Caco-2 (cell line): ENCODE measurements at regions of chr9 and their contacts with region 1.

Region 1: GRCh38 chr9:129823935-129824601 is at the start of gene TOR1A:
- DNase-seq: peak; percentile 93 to 95
- H3K4me3 ChIP-seq: peak within 1 kb of the TSS; percentile 100
- H3K4me3 Mint-ChIP-seq: peak within 1 kb of the TSS; percentile 90
- H3K27ac Mint-ChIP-seq: peak within 1 kb of the TSS; percentile 81
- H3K4me1 ChIP-seq: no peaks in the 10 kb centered on the region
- H3K4me1 Mint-ChIP-seq: peaks cover 6% of the 10 kb centered on the region
- H3K27me3 ChIP-seq: no peaks in the 10 kb centered on the region
- H3K27me3 Mint-ChIP-seq: no peaks in the 10 kb centered on the region
- CTCF ChIP-seq: no peak
- total RNA-seq, gene TOR1A: 31.8 and 32.2 TPM in 2 replicates

Region 2: DNA sequence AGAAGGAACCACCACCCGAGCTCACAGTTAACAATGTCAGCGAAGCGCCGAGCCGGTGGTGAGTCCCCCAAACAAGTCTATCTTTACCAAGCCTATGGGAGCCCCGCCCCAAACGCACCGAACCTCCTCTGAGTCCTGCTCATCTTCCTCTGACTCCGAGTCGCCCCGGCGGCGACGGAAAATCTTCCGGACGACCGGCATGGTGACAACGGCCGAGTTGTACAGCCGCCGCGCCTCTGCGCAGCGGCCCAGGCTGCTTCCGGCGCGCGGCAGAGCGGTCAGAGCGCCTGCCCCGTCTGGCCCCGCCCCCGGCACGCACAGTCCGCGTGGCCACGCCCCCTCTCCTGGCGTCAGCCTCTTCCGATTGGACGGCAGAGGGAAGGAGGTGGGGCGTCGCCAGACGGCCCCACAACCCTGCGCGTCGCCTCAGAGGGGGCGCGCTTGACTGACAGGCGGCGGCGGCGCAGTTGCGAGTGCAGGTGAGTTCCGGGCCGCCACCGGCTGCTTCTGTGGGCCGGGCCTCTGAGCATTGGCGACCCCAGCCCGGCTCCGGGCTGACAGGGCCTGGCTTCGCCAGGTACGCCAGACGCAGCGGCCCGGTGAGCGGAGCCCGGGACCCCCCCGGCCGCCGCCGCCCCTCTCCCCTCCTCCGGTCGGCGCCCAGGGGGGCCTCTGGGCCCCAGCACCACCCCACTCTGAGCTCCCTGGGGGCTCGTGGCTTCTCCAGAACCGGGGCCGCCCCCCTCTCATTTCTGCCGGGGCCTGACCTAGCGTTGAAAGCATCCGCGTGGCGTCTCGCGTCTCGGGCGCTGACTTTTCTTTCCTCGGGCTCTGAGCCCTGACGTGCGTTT is 11.2 kb after region 1 on chr9 and contains the starts of genes C9orf78 and USP20:
- CTCF ChIA-PET with region 1: no interaction called
- POLR2A ChIA-PET with region 1: no interaction called
- intact Hi-C with region 1: loop called (anchors 1 kb)
- DNase-seq: peak; percentile 95 to 98
- H3K4me3 ChIP-seq: peak within 1 kb of the TSS; percentile 82
- H3K4me3 Mint-ChIP-seq: peak within 1 kb of the TSS; percentile 100
- H3K27ac Mint-ChIP-seq: peak within 1 kb of the TSS; percentile 100
- H3K4me1 ChIP-seq: peaks cover 3% of the 10 kb centered on the region; the same call in 1 of the 2 replicates
- H3K4me1 Mint-ChIP-seq: peaks cover 11% of the 10 kb centered on the region
- H3K27me3 ChIP-seq: no peaks in the 10 kb centered on the region
- H3K27me3 Mint-ChIP-seq: no peaks in the 10 kb centered on the region
- CTCF ChIP-seq: no peak
- total RNA-seq, gene C9orf78: 38.3 and 44.1 TPM in 2 replicates
- total RNA-seq, gene USP20: 13.9 and 16.5 TPM in 2 replicates